Right ventricle myocardium inferior (tissue), 1 donor: ENCODE measurements at regions of chr11 and their contacts with region 1.

Region 1: GRCh38 chr11:103024086-103024485 is 67.9 kb downstream of the DCUN1D5 start:
- DNase-seq: no peak
- ATAC-seq: no peak

Region 2: GRCh38 chr11:102964867-102965266 is 59.2 kb before region 1 on chr11:
- intact Hi-C with region 1: loop called (anchors 5 kb)
- DNase-seq: no peak
- ATAC-seq: no peak